Dorsolateral prefrontal cortex (tissue), 120 donors: ENCODE measurements at regions of chr20 and their contacts with region 1.

Region 1: GRCh38 chr20:63216041-63216848 is at the start of gene YTHDF1:
- DNase-seq: peak; percentile 87 to 97 (median 94)
- H3K4me3 ChIP-seq: peak within 1 kb of the TSS; percentile 65 to 98 (median 89)
- H3K27ac ChIP-seq: peak within 1 kb of the TSS; percentile 37 to 95 (median 87)
- H3K27me3 ChIP-seq: no peaks in the 10 kb centered on the region
- CTCF ChIP-seq: peak in 31 of 56 donors; percentile 9 to 60 (median 33)
- total RNA-seq, gene YTHDF1: 31.4 to 71.9 (median 38.9) TPM

Region 2: DNA sequence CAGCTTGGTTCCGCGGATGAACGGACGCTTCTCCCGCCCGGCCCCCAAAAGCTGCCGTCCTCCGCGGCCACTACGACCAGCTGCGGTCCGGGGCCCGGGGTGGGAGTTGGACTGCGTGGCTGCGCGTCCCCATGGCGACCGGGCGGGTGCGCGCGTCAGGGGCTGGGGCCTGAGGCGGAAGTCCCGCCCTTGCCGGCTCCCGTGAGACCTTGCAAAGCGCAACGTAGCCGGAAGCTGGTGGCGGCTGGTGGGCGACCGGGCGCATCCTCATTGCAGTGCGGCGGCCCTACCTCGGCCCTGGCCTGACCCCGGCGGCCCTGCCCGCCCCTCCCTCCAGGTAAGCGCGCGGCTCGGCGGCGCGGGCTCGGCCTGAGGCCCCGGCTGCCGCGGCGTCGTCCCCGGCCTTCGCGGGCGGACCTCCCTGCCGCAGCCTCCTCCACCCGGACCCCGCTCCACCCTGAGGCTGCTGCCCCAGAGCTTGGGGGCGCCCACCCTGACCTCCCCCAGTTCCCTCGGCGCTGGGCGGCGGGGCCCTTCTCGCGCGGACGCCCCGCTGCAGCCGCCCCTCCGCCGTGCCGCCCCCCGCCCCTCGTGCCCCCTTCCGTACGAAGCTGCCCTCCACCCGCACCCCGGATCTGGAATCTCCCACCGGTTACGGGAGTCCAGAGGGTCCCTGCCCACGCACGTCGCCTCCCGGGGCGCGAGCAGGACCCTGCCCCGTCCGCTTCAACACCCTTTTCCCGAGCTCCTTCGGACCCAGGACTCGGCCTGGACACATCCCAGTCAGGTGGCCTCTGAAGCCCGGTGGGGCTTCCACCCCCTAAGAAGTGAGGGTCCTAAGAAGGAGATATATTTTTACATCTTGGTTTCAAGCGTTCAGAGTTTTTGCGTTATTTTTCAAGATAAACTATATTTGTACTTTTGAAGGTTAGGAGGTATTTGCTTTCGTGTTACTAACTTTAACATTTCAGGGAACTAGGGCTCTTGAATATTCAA is 56.6 kb after region 1 on chr20 and contains the start of gene ARFGAP1:
- intact Hi-C with region 1: loop called in 1 of 2 experiments (anchors 5 kb)
- DNase-seq: peak; percentile 84 to 97 (median 92)
- H3K4me3 ChIP-seq: peak within 1 kb of the TSS; percentile 60 to 99 (median 85)
- H3K27ac ChIP-seq: peak within 1 kb of the TSS in 30 of 59 donors; percentile 3 to 81 (median 48)
- H3K27me3 ChIP-seq: no peaks in the 10 kb centered on the region
- CTCF ChIP-seq: peak in 12 of 56 donors; percentile 6 to 37 (median 18)
- total RNA-seq, gene ARFGAP1: 89.0 to 166 (median 113) TPM